GM13976 (cell line): ENCODE measurements at regions of chr12 and their contacts with region 1.

Region 1: DNA sequence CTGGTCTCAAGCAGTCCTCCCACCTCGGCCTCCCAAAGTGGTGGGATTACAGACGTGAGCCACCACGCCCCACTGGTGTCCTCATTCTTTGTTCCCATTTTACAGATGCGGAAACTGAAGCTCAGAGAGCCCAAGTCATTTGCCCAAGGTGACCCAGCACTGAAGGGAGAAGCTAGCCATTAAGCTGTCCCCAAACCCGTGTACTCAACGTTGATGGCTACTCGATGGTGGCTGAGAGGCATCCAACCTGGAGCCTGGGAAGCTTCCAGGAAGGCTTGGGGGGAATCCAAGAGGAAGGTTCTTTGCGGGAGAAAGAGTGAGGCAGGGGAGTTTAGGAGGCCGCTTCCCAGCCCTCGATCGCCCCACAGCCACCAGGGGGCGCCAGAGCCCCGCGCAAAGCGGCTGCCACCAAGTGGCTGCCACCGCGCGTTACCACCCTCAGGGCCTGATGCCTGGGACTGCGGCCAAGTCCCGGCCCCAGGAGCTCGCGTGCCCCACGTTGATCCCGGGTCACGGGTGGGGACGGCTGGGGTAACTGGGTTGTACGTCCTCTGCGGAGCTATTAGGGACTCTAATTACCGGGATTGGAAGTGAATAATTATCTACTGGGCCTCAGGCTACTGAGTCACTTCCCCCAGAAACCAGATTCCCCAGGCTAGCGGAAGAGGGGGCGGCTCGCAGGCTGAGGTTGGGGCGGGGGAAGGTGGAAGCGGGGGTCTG is 8.8 kb upstream of the SH2B3 start:
- DNase-seq: peak; percentile 89
- CTCF ChIP-seq: peak; percentile 97

Region 2: GRCh38 chr12:111444925-111445725 is 48.2 kb after region 1 on chr12:
- in situ Hi-C with region 1: loop called (anchors 5 kb)
- DNase-seq: peak; percentile 92
- CTCF ChIP-seq: no peak

Region 3: DNA sequence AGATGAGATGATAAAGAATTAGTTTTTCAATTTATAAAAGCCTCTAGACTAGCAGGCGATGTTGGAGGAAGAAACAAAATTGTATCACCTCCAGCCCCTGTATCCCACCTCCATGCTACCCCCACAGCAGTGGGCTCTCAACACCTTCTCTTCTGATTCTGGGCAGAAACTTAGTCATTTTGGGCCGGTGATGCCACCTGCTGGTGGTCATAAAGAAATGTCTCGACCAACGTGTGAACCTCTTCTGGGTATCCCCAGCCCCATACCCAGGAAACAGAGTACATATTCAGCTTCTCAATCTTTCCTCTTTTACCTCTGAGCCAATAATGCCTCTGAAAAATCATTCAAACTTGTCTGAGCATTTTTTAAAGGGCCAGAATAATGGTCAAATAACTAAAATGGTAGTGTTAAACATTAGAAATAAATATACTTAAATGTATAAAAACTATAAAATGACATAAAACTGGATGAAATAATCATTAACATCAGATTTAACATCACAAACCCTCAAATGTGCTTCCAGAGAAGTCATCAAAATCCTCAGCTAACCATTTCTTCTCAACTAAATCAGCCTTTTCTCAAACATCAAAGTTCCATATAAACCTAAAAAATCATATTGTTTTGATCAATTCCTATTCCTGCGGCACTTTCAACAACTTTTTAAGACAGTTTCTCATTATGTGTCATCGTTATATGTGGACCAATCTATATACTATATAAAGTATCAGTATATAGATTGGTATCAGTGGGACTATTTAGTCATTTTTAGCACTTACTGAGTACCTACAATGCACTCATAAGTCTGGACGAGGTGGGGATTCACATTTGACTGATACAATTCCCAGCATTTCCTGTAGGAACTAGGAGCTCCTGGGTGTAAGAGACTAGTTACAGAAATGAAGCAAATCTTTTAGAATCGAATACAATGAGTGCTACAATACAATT is 132.8 kb after region 1 on chr12:
- in situ Hi-C with region 1: loop called (anchors 10 kb)
- DNase-seq: peak; percentile 82
- CTCF ChIP-seq: peak; percentile 63